ENCODE measurements at regions of chr1 and their contacts with region 1.

Region 1: DNA sequence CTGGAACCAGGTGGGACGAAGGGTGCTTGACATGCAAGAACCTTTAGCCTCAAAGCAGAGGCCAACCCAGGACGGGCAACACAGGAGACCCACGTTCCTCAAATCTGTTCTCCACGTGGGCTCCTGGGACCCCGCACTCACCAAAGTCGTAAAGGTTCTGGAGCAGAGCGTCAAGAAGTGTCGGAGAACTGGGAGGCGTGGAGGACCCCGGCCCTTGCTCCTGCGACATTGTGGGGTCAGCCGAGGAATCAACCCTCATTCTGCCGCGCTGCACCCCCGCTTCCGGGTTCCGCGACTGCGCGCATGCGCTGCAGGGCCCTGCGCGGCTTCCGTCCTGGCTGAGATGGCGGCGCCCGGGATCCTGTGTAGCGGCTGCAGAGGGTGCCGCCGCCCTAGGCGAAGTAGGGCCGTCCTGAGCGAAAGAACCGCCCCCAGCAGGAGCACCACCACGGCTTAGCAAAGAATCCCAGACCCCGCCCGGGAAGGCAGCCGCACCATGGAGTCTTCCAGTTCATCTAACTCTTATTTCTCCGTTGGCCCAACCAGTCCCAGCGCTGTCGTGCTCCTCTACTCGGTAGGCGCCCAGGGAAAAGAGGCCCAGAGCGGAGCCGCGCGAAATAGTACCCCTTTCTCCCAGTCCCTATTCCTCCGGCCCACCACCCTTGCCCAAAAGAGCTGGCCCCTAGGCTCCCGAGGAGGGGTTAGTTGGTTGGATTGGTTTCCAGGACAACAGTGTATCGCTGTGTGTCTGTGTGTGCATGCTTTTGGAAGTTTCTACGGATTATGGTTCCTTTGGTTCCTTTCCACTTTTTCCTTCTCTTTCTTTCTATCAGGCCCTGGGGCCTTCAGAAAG is at the start of gene GNPAT:
- DNase-seq: peak; percentile 84 to 96 (median 91)
- ATAC-seq: peak; percentile 96
- H3K4me3 ChIP-seq: peak within 1 kb of the TSS; percentile 77
- H3K4me3 Mint-ChIP-seq: peak within 1 kb of the TSS; percentile 88
- H3K27ac ChIP-seq: peak within 1 kb of the TSS; percentile 79 to 80
- H3K27ac Mint-ChIP-seq: peak within 1 kb of the TSS; percentile 91
- H3K4me1 ChIP-seq: peaks cover 35% of the 10 kb centered on the region
- H3K4me1 Mint-ChIP-seq: peaks cover 78% of the 10 kb centered on the region
- H3K27me3 ChIP-seq: no peaks in the 10 kb centered on the region
- H3K27me3 Mint-ChIP-seq: no peaks in the 10 kb centered on the region
- CTCF ChIP-seq: no peak
- total RNA-seq, gene GNPAT: 10.4 to 11.0 TPM

Region 2: GRCh38 chr1:229558571-229559335 is 1682.4 kb before region 1 on chr1 and contains the start of gene ABCB10:
- CTCF ChIA-PET with region 1: no interaction called
- POLR2A ChIA-PET with region 1: no interaction called
- intact Hi-C with region 1: loop called in 1 of 2 experiments (anchors 2 kb)
- DNase-seq: peak; percentile 56 to 93 (median 81)
- ATAC-seq: peak; percentile 81
- H3K4me3 ChIP-seq: peak within 1 kb of the TSS; percentile 74 to 82
- H3K4me3 Mint-ChIP-seq: peak within 1 kb of the TSS; percentile 95
- H3K27ac ChIP-seq: peak within 1 kb of the TSS; percentile 52 to 70
- H3K27ac Mint-ChIP-seq: peak within 1 kb of the TSS; percentile 90
- H3K4me1 ChIP-seq: peaks cover 18% of the 10 kb centered on the region
- H3K4me1 Mint-ChIP-seq: peaks cover 37% of the 10 kb centered on the region
- H3K27me3 ChIP-seq: no peaks in the 10 kb centered on the region
- H3K27me3 Mint-ChIP-seq: no peaks in the 10 kb centered on the region
- CTCF ChIP-seq: peak; percentile 30
- total RNA-seq, gene ABCB10: 6.1 to 7.6 TPM

Region 3: GRCh38 chr1:230426246-230427093 is 814.6 kb before region 1 on chr1 and contains the start of gene PGBD5:
- CTCF ChIA-PET with region 1: no interaction called
- POLR2A ChIA-PET with region 1: no interaction called
- intact Hi-C with region 1: no loop called
- DNase-seq: peak in 8 of 9 experiments; percentile 4 to 64 (median 41)
- ATAC-seq: peak; percentile 82
- H3K4me3 ChIP-seq: no peak within 1 kb of the TSS
- H3K4me3 Mint-ChIP-seq: peak within 1 kb of the TSS; percentile 79
- H3K27ac ChIP-seq: no peak within 1 kb of the TSS
- H3K27ac Mint-ChIP-seq: no peak within 1 kb of the TSS
- H3K4me1 ChIP-seq: peaks cover 9% of the 10 kb centered on the region
- H3K4me1 Mint-ChIP-seq: peaks cover 14% of the 10 kb centered on the region
- H3K27me3 ChIP-seq: peaks cover 14 to 29% of the 10 kb centered on the region in 2 experiments
- H3K27me3 Mint-ChIP-seq: peaks cover 54% of the 10 kb centered on the region
- CTCF ChIP-seq: no peak
- total RNA-seq, gene PGBD5: not detected

Region 4: GRCh38 chr1:230867903-230868735 is 373.0 kb before region 1 on chr1 and contains the start of gene C1orf198:
- CTCF ChIA-PET with region 1: no interaction called
- POLR2A ChIA-PET with region 1: no interaction called
- intact Hi-C with region 1: loop called (anchors 1 to 2 kb)
- DNase-seq: peak; percentile 53 to 88 (median 72)
- ATAC-seq: peak; percentile 93
- H3K4me3 ChIP-seq: peak within 1 kb of the TSS; percentile 65 to 79
- H3K4me3 Mint-ChIP-seq: peak within 1 kb of the TSS; percentile 89
- H3K27ac ChIP-seq: peak within 1 kb of the TSS in 1 of 2 experiments; percentile 57
- H3K27ac Mint-ChIP-seq: peak within 1 kb of the TSS; percentile 49
- H3K4me1 ChIP-seq: peaks cover 14% of the 10 kb centered on the region
- H3K4me1 Mint-ChIP-seq: peaks cover 21% of the 10 kb centered on the region
- H3K27me3 ChIP-seq: no peaks in the 10 kb centered on the region
- H3K27me3 Mint-ChIP-seq: peaks cover 18% of the 10 kb centered on the region
- CTCF ChIP-seq: no peak
- total RNA-seq, gene C1orf198: 3.2 to 3.8 TPM

Region 5: GRCh38 chr1:231040019-231040799 is 200.9 kb before region 1 on chr1 and contains the start of gene FAM89A:
- CTCF ChIA-PET with region 1: no interaction called
- POLR2A ChIA-PET with region 1: no interaction called
- intact Hi-C with region 1: loop called (anchors 2 to 10 kb)
- DNase-seq: peak; percentile 44 to 86 (median 71)
- ATAC-seq: peak; percentile 72
- H3K4me3 ChIP-seq: peak within 1 kb of the TSS; percentile 81 to 83
- H3K4me3 Mint-ChIP-seq: peak within 1 kb of the TSS; percentile 83
- H3K27ac ChIP-seq: no peak within 1 kb of the TSS
- H3K27ac Mint-ChIP-seq: peak within 1 kb of the TSS; percentile 27
- H3K4me1 ChIP-seq: peaks cover 22% of the 10 kb centered on the region
- H3K4me1 Mint-ChIP-seq: peaks cover 33% of the 10 kb centered on the region
- H3K27me3 ChIP-seq: no peaks in the 10 kb centered on the region
- H3K27me3 Mint-ChIP-seq: no peaks in the 10 kb centered on the region
- CTCF ChIP-seq: no peak
- total RNA-seq, gene FAM89A: 1.4 to 2.1 TPM

Region 6: DNA sequence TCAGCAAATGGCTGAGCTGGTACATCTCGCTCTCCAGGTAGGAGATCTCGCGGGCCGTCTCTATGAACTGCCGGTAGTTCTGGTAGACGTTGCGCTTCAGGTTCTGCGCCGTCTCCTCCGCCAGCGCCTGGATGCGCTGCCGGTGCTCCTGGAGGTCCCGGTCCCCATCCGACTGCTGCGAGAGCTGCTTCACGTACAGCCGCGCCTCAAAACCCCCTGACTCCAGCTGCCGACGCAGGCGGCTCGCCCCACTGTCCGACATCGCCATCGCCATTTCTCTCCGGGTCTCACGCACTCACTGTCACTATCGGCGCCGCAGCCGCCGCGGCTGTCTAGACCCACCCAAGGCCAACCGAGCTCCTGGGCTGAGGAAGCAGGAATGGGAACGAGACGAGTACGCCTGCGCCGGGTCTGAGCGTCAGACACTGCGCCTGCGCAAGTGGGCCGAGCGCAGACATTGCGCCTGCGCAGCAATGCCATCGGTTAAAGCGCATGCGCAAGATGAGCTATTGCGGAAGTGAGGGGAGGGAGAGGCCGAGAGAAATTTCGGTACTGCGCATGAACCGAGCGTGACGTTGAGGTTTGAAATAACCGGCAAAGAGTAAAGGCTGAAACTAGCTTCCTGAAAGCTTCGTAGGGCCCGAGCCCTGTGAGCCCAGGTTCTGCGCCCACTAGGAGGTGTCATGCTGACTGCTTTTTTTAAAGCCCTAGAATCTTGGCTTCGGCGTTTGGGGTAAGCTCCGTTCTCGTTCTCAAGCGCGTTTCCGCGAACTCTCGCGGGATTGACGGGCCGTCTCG is 96.6 kb after region 1 on chr1 and contains the start of gene EXOC8:
- CTCF ChIA-PET with region 1: no interaction called
- POLR2A ChIA-PET with region 1: no interaction called
- intact Hi-C with region 1: loop called (anchors 2 kb)
- DNase-seq: peak; percentile 95 to 99 (median 98)
- ATAC-seq: peak; percentile 83
- H3K4me3 ChIP-seq: peak within 1 kb of the TSS; percentile 95 to 98
- H3K4me3 Mint-ChIP-seq: peak within 1 kb of the TSS; percentile 97
- H3K27ac ChIP-seq: peak within 1 kb of the TSS; percentile 97 to 98
- H3K27ac Mint-ChIP-seq: peak within 1 kb of the TSS; percentile 99
- H3K4me1 ChIP-seq: peaks cover 55% of the 10 kb centered on the region
- H3K4me1 Mint-ChIP-seq: peaks cover 64% of the 10 kb centered on the region
- H3K27me3 ChIP-seq: no peaks in the 10 kb centered on the region
- H3K27me3 Mint-ChIP-seq: no peaks in the 10 kb centered on the region
- CTCF ChIP-seq: no peak
- total RNA-seq, gene EXOC8: 28.8 to 28.9 TPM

Region 7: GRCh38 chr1:231626535-231626945 is 385.4 kb after region 1 on chr1 and contains the start of gene DISC1:
- CTCF ChIA-PET with region 1: no interaction called
- POLR2A ChIA-PET with region 1: no interaction called
- intact Hi-C with region 1: loop called in 1 of 2 experiments (anchors 10 kb)
- DNase-seq: peak; percentile 31 to 80 (median 63)
- ATAC-seq: peak; percentile 75
- H3K4me3 ChIP-seq: peak within 1 kb of the TSS; percentile 89 to 92
- H3K4me3 Mint-ChIP-seq: peak within 1 kb of the TSS; percentile 96
- H3K27ac ChIP-seq: peak within 1 kb of the TSS; percentile 32 to 50
- H3K27ac Mint-ChIP-seq: peak within 1 kb of the TSS; percentile 90
- H3K4me1 ChIP-seq: peaks cover 26% of the 10 kb centered on the region
- H3K4me1 Mint-ChIP-seq: peaks cover 42% of the 10 kb centered on the region
- H3K27me3 ChIP-seq: peaks cover 0 to 7% of the 10 kb centered on the region in 2 experiments
- H3K27me3 Mint-ChIP-seq: no peaks in the 10 kb centered on the region
- CTCF ChIP-seq: no peak
- total RNA-seq, gene DISC1: 9.6 to 10.1 TPM